ENCODE measurements at regions of chr10 and their contacts with region 1.

Region 1: GRCh38 chr10:72355214-72355555 is 466 bp upstream of the DNAJB12 start:
- DNase-seq: no peak
- H3K4me3 Mint-ChIP-seq: peak overlapping the region; percentile 97
- H3K27ac Mint-ChIP-seq: peak overlapping the region; percentile 95
- H3K4me1 Mint-ChIP-seq: peaks cover 22% of the 10 kb centered on the region
- H3K27me3 Mint-ChIP-seq: no peaks in the 10 kb centered on the region
- CTCF ChIP-seq: no peak

Region 2: DNA sequence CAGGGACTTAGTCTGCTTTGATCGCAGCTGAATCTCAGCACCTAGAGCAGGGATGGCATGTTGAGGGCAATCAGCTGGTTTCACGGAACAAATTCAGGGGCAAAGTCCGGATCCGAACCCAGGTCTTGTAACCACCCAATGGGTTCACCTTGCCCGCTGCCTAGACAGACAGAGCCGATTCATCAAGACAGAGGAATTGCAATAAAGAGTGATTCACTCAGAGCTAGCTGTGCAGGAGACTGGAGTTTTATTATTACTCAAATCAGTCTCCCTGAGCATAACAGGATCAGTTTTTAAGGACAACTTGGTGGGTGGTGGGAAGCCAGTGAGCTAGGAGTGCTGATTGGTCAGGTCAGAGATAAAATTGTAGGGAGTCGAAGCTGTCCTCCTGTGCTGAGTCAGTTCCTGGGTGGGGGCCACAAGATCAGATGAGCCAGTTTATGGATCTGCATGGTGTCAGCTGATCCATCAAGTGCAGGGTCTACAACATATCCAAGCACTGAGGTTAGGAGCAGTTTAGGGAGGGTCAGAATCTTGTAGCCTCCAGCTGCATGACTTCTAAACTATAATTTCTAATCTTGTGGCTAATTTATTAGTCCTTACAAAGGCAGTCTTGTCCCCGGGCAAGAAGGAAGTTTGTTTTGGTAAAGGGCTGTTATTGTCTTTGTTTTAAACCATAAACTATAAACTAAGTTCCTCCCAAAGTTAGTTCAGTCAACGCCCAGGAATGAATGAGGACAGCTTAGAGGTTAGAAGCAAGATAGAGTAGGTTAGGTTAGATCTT is 434.5 kb before region 1 on chr10:
- CTCF ChIA-PET with region 1: interaction called, 11 read pairs
- intact Hi-C with region 1: no loop called
- DNase-seq: no peak
- H3K4me3 Mint-ChIP-seq: peak overlapping the region; percentile 4
- H3K27ac Mint-ChIP-seq: no peak overlapping the region
- H3K4me1 Mint-ChIP-seq: peaks cover 25% of the 10 kb centered on the region
- H3K27me3 Mint-ChIP-seq: no peaks in the 10 kb centered on the region
- CTCF ChIP-seq: no peak

Region 3: DNA sequence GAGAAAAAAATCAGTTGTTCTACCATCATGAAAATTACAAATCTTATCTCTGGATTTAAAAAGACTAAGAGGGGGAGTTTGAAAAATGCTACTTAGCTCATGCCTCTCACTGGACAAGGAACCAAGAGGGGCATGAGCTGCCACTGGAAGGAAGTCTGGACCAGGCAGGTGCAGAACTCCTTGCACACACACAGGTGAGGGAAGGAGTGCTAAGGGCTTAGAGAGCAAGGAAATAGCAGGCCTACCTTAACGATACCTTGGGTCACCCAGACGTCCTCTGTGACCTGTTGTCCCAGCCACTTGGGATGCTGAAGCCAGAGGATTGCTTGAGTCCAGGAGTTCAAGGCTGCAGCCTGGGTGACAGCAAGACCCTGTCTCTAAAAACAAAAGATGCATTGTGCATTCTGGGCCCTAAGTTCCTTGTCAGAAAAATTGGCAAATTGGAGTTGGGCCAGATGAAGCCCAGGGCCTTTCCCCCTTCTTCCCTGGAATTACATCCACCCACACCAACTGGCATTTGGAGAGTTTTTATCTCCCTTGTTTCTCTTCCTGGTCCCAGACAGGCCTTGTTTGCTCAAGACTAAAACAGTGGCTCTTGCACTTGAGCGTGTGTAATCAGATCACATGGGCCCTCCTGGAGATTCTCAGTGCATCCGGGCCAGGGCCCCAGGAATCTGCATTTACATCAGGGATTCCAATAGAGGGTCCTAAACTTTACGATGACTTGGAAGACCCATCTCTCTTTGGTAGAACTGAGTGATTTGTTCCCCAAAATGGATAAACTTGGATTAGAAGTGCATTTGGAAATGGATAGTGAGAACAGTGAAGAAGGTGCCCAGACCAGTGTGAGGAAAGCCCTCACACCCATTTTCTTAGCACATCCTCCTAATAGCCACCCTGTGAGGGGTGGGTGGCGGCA is 78.5 kb before region 1 on chr10:
- CTCF ChIA-PET with region 1: no interaction called
- intact Hi-C with region 1: no loop called
- DNase-seq: peak; percentile 60
- H3K4me3 Mint-ChIP-seq: peak overlapping the region; percentile 95
- H3K27ac Mint-ChIP-seq: peak overlapping the region; percentile 99
- H3K4me1 Mint-ChIP-seq: peaks cover 51% of the 10 kb centered on the region
- H3K27me3 Mint-ChIP-seq: no peaks in the 10 kb centered on the region
- CTCF ChIP-seq: no peak